ENCODE measurements at regions of chr9 and their contacts with region 1.

Region 1: GRCh38 chr9:96344458-96345180 is 38.9 kb downstream of the SLC35D2 start:
- DNase-seq: no peak
- ATAC-seq: peak; percentile 78
- H3K4me3 Mint-ChIP-seq: no peak overlapping the region
- H3K27ac Mint-ChIP-seq: no peak overlapping the region
- H3K4me1 Mint-ChIP-seq: peaks cover 50% of the 10 kb centered on the region
- H3K27me3 Mint-ChIP-seq: no peaks in the 10 kb centered on the region
- CTCF ChIP-seq: no peak

Region 2: GRCh38 chr9:96327694-96328352 is 16.8 kb before region 1 on chr9:
- CTCF ChIA-PET with region 1: interaction called, 16 read pairs
- POLR2A ChIA-PET with region 1: no interaction called
- DNase-seq: no peak
- ATAC-seq: peak; percentile 53; the same call in 1 of the 2 replicates
- H3K4me3 Mint-ChIP-seq: no peak overlapping the region
- H3K27ac Mint-ChIP-seq: no peak overlapping the region
- H3K4me1 Mint-ChIP-seq: peaks cover 13% of the 10 kb centered on the region
- H3K27me3 Mint-ChIP-seq: no peaks in the 10 kb centered on the region
- CTCF ChIP-seq: peak; percentile 70

Measured in WTC11 (cell line).